Aorta (tissue), 5 donors: ENCODE measurements at regions of chr1 and their contacts with region 1.

Region 1: GRCh38 chr1:203861379-203862184 is at the start of gene SNRPE:
- DNase-seq: peak; percentile 97 to 98
- ATAC-seq: peak; percentile 99
- H3K4me3 ChIP-seq: peak within 1 kb of the TSS; percentile 56 to 61
- H3K27ac ChIP-seq: peak within 1 kb of the TSS in 1 of 2 donors; percentile 83
- H3K4me1 ChIP-seq: peaks cover 4 to 7% of the 10 kb centered on the region in 2 donors
- H3K27me3 ChIP-seq: no peaks in the 10 kb centered on the region
- total RNA-seq, gene SNRPE: 53.7 to 55.0 TPM

Region 2: GRCh38 chr1:203795441-203796235 is 65.9 kb before region 1 on chr1 and contains the starts of genes ZBED6 and ZC3H11A:
- intact Hi-C with region 1: loop called in 1 of 2 experiments (anchors 5 kb)
- DNase-seq: peak; percentile 100
- ATAC-seq: peak; percentile 99
- H3K4me3 ChIP-seq: peak within 1 kb of the TSS; percentile 96 to 100
- H3K27ac ChIP-seq: peak within 1 kb of the TSS; percentile 73 to 98
- H3K4me1 ChIP-seq: peaks cover 3 to 16% of the 10 kb centered on the region in 2 donors
- H3K27me3 ChIP-seq: no peaks in the 10 kb centered on the region
- total RNA-seq, gene ZBED6: 55.1 to 58.7 TPM
- total RNA-seq, gene ZC3H11A: 71.2 to 86.4 TPM

Region 3: DNA sequence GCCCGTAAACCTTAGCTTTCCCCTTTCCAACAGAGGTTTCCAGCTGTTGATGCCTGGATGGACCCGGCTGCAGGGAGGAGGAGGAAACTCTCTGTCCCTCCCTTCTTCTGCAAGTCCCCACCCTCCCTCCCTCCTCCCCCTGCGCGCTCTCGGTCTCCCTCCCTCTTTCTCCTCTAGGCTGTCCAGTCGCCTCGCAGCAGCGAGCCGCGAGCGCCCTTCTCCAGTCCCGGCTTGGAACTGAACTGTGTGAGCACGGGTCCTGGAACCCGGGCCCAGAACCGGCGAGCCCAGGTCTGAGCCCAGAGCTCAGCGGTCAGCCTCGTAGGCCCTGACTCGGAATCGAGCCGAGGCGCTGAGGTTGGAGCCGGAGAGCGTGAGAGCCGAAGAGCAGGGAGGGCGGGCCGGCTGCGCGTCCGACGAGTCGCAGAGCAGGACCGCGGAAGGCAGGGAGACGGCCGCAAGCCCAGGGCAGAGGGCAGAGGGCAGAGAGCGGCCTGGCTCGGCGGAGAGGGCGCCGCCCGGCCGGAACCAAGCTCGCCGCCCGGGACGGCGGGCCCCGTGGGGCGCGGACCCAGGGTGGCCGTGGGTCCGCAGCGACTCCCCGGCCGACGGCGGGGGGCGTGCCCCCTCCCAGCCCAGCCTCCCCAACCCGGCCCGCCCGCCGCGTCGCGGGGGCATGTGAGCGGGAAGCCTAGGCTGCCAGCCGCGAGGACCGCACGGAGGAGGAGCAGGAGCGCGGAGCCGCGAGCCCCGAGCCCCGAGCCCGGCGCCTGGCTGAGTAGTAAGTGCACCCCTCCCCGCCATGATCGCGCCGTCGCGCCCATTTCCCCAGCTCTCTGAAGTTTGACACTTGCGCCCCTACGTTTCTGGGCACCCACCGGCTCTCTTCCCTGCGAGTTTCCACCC is 211.6 kb after region 1 on chr1 and contains the start of gene SOX13:
- intact Hi-C with region 1: loop called (anchors 5 kb)
- DNase-seq: peak; percentile 91 to 94
- ATAC-seq: peak; percentile 89
- H3K4me3 ChIP-seq: peak within 1 kb of the TSS; percentile 70 to 89
- H3K27ac ChIP-seq: peak within 1 kb of the TSS in 1 of 2 donors; percentile 82
- H3K4me1 ChIP-seq: no peaks in the 10 kb centered on the region
- H3K27me3 ChIP-seq: no peaks in the 10 kb centered on the region
- total RNA-seq, gene SOX13: 40.9 to 52.8 TPM

Region 4: DNA sequence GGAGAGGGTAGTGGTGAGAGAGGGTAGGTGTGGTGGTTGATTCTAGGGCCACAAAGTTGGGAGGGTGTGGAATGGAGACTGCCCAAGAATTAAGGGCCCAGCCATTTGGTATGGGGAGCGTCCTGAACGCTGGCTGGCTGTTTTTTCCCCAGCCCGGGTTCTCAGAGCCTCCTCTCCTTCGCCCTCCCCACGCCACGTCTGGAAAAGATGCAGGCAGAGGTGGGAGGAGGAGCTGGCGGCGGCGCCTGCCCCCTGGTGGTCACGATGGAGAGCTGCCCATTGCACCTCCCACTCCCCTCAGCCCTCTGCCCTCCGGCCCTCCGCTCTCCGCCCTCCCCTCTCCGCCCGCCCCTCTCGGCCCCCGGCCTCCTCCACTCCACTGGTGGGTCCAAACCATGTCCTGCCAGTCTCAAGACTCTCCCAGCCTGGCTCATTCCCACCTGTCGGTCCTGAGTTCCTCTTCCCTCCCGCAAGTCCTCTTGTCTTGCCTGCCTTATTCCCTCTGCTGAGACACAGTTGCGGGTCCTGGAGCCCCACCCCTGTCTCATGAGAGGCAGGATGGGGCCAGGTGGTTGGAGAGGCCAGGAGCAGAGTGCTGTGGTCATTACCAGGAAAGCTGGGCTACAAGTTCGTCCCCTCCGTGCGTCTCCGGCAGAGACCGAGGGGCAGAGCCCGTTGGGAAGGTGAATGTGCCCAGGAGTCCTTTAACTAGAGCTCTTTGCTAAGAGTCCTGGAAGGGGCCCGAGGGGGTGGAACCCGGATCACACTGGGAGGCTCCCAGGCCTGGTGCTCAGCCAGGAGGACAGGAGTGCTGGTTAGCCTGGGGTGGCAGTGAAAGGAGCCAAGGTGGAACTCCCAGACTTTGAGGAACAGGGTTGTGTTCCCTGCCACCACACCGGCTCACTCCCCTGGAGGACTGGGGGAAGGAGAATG is 267.6 kb after region 1 on chr1:
- intact Hi-C with region 1: loop called (anchors 2 kb)
- DNase-seq: peak; percentile 76 to 91
- ATAC-seq: peak; percentile 86
- H3K4me3 ChIP-seq: no peak overlapping the region
- H3K27ac ChIP-seq: no peak overlapping the region
- H3K4me1 ChIP-seq: no peaks in the 10 kb centered on the region
- H3K27me3 ChIP-seq: no peaks in the 10 kb centered on the region

Region 5: GRCh38 chr1:204411451-204412204 is 550.0 kb after region 1 on chr1 and contains the start of gene PPP1R15B:
- intact Hi-C with region 1: loop called in 1 of 2 experiments (anchors 10 kb)
- DNase-seq: peak; percentile 98 to 99
- ATAC-seq: peak; percentile 98
- H3K4me3 ChIP-seq: peak within 1 kb of the TSS; percentile 55 to 58
- H3K27ac ChIP-seq: peak within 1 kb of the TSS; percentile 70 to 97
- H3K4me1 ChIP-seq: peaks cover 0 to 4% of the 10 kb centered on the region in 2 donors
- H3K27me3 ChIP-seq: no peaks in the 10 kb centered on the region
- total RNA-seq, gene PPP1R15B: 39.3 to 59.9 TPM